ENCODE measurements at regions of chr9 and their contacts with region 1.

Region 1: DNA sequence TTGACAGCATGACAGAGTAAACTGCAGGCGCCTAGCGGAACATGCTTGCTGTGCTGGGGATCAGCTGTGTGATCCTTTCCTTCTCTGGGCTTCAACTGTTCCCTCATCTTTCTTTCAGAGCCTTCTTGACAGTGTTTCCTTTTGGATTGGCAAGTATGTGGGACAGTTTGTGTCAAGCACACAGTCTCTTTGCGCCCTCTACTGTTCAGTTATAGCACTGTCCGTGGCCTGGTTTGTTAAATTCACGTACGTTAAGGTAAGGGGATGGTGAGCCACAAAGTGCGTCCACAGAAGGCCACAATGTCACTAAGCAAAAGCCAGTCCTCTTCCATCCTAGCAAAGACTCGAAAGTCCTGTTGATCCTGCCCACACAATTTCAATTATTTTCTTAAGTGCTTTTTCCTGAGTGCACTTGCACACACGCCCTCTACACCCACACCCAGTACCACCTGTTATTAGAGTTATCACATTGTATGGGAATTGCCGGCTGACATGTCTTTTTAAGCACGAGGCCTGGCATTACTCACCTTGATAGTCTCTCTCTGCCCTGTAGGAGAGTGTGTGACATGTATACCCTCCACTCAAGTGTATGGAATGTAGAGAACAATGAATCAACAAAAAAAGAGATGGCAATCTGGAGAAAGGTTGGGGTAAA is 22.5 kb upstream of the PTPN3 start:
- DNase-seq: peak; percentile 24
- H3K4me3 Mint-ChIP-seq: no peak overlapping the region
- H3K27ac Mint-ChIP-seq: no peak overlapping the region
- H3K4me1 Mint-ChIP-seq: no peaks in the 10 kb centered on the region
- H3K27me3 Mint-ChIP-seq: peaks cover 23% of the 10 kb centered on the region

Region 2: DNA sequence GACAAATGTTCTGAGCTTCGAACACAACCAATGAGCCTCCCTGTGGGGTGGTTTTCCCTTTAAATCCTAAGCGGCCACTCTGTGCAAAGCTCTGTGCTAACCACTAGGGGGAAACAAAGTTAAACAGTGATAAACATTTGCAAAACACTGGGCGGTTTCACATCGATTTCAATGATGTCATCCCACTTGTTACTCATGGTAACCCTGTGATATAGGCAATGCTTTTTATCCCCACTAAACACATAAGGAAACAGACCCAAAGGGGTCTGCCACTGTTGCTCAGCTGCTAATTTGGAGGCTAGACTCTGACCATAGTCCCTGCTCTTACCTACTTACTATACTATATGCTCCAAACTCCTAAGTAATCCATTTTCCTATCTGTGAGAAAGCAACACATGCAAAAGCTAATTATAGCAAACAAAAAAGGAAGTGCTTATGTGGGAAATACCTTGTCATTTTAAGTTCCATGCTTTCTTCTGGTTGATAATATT is 79.8 kb before region 1 on chr9:
- intact Hi-C with region 1: loop called (anchors 2 kb)
- DNase-seq: peak; percentile 60
- H3K4me3 Mint-ChIP-seq: no peak overlapping the region
- H3K27ac Mint-ChIP-seq: peak overlapping the region; percentile 80
- H3K4me1 Mint-ChIP-seq: peaks cover 29% of the 10 kb centered on the region
- H3K27me3 Mint-ChIP-seq: peaks cover 18% of the 10 kb centered on the region